PC-3 (cell line): ENCODE measurements at regions of chr11 and their contacts with region 1.

Region 1: DNA sequence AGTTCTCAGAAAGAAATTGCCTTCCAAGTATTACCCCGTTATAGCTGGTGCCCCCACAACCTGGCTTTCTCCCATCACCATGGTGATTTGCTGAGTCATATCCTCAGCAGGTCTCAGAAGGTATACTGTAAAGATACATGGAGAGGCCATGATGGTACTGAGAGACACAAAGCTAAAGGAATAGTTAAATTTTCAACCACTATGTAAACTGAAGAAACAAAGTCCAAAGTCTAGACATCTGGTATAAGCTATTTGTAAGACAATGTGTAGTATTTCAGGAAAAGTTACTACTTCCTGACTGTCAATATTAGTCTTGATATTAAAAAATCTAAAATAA is 377.1 kb downstream of the DCDC1 start:
- DNase-seq: no peak
- ATAC-seq: no peak
- H3K4me3 ChIP-seq: no peak overlapping the region
- H3K27ac ChIP-seq: no peak overlapping the region
- H3K4me1 ChIP-seq: no peaks in the 10 kb centered on the region
- H3K27me3 ChIP-seq: 0 out of 2 replicates have a peak, but pooled peaks cover 4% of the 10 kb centered on the region
- CTCF ChIP-seq: no peak

Region 2: DNA sequence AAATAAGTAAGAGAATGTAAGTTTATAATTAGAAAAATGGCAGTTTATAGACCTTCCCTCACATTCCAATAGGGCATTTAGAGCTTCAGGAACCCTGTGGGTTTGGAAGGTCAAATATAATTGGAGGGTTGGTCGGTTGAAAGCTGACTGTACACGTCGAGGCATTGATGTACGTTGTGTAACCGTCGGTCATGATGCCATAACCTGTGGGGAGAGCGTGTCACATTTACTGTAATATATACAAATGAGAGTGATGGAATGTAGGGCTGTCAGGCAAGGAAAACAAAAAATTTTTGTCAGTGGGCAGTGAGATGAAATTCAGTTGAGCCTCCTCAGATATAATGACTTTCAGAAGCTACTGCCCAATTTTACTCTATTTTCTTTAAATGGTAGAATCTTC is 581.1 kb before region 1 on chr11:
- CTCF ChIA-PET with region 1: no interaction called
- POLR2A ChIA-PET with region 1: no interaction called
- intact Hi-C with region 1: no loop called
- DNase-seq: no peak
- ATAC-seq: no peak
- H3K4me3 ChIP-seq: no peak overlapping the region
- H3K27ac ChIP-seq: no peak overlapping the region
- H3K4me1 ChIP-seq: no peaks in the 10 kb centered on the region
- H3K27me3 ChIP-seq: peaks cover 38% of the 10 kb centered on the region
- CTCF ChIP-seq: no peak

Region 3: GRCh38 chr11:31019786-31020185 is 27.3 kb after region 1 on chr11:
- CTCF ChIA-PET with region 1: no interaction called
- POLR2A ChIA-PET with region 1: no interaction called
- intact Hi-C with region 1: loop called (anchors 2 kb)
- DNase-seq: no peak
- ATAC-seq: no peak
- H3K4me3 ChIP-seq: no peak overlapping the region
- H3K27ac ChIP-seq: no peak overlapping the region
- H3K4me1 ChIP-seq: no peaks in the 10 kb centered on the region
- H3K27me3 ChIP-seq: no peaks in the 10 kb centered on the region
- CTCF ChIP-seq: no peak